CD14-positive monocyte (primary cell): ENCODE measurements at regions of chrX and their contacts with region 1.

Region 1: DNA sequence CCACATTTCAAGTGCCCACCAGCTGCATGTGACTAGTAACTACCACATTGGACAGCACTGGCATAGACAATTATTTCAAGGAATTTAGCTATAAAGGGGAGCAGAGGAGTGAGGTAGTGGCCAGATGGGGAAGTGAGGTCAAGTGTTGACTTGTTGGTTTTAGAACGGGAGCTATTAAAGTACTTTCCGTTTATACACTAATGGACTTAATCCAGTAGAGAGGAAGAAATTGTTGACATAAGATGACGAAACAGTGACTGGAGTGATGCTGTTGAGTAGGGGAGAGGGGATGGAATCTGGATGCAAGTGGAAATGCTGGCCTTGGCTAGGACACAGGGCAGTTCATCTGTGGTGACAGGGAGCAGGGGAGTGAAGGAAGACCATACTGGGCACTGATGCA is 154.4 kb downstream of the AMMECR1 start:
- DNase-seq: no peak
- H3K4me3 ChIP-seq: no peak overlapping the region
- H3K4me3 Mint-ChIP-seq: no peak overlapping the region
- H3K27ac ChIP-seq: no peak overlapping the region
- H3K27ac Mint-ChIP-seq: no peak overlapping the region
- H3K4me1 ChIP-seq: peaks cover 0 to 5% of the 10 kb centered on the region in 2 donors
- H3K4me1 Mint-ChIP-seq: peaks cover 12% of the 10 kb centered on the region
- H3K27me3 ChIP-seq: no peaks in the 10 kb centered on the region
- H3K27me3 Mint-ChIP-seq: no peaks in the 10 kb centered on the region
- CTCF ChIP-seq: no peak

Region 2: GRCh38 chrX:110407910-110408545 is 244.5 kb after region 1 on chrX:
- intact Hi-C with region 1: loop called (anchors 5 kb)
- DNase-seq: peak; percentile 15 to 45 (median 35)
- H3K4me3 ChIP-seq: no peak overlapping the region
- H3K4me3 Mint-ChIP-seq: no peak overlapping the region
- H3K27ac ChIP-seq: no peak overlapping the region
- H3K27ac Mint-ChIP-seq: no peak overlapping the region
- H3K4me1 ChIP-seq: no peaks in the 10 kb centered on the region
- H3K4me1 Mint-ChIP-seq: peaks cover 3% of the 10 kb centered on the region
- H3K27me3 ChIP-seq: no peaks in the 10 kb centered on the region
- H3K27me3 Mint-ChIP-seq: peaks cover 0 to 11% (median 0%) of the 10 kb centered on the region in 3 donors
- CTCF ChIP-seq: peak; percentile 73

Region 3: DNA sequence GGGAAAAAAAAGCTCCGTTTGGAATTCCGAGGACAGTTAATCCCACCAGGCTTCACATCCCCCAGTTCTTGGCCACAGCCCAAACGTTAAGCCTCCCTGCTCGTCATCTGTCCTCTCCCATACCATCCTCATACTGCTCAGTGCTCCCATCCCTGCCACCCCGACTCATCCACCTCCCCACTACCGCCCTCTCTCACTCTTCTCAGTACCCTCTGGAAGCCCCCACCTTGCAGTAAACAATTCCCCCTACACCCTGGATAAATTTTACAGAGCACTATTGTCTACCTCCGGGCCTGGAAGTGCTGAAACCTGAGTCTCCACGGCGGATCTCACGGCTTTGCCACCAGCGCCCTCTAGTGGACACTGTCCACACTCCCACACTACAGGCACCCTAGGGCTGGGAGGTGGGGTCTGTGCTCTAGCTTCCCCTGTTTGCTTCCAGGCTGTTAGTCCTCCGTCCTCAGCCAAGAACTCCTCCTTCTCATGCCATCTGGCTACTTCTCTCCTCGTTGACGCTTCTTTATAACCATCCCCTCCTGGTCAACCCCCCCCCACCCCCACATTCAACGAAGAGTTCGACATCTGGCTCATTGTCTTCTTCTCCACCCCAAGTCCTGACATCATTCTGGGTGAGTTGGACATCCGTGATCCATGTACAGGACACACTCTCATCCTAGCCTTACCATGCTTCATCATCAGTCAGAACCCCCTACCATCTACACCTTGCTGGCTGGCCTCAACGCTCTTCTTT is 249.7 kb after region 1 on chrX:
- intact Hi-C with region 1: loop called (anchors 5 kb)
- DNase-seq: peak; percentile 41 to 58 (median 49)
- H3K4me3 ChIP-seq: no peak overlapping the region
- H3K4me3 Mint-ChIP-seq: no peak overlapping the region
- H3K27ac ChIP-seq: no peak overlapping the region
- H3K27ac Mint-ChIP-seq: no peak overlapping the region
- H3K4me1 ChIP-seq: no peaks in the 10 kb centered on the region
- H3K4me1 Mint-ChIP-seq: peaks cover 4% of the 10 kb centered on the region
- H3K27me3 ChIP-seq: no peaks in the 10 kb centered on the region
- H3K27me3 Mint-ChIP-seq: peaks cover 2 to 20% (median 4%) of the 10 kb centered on the region in 3 donors
- CTCF ChIP-seq: peak; percentile 71